Calu3 (cell line): ENCODE measurements at regions of chr11 and their contacts with region 1.

Region 1: DNA sequence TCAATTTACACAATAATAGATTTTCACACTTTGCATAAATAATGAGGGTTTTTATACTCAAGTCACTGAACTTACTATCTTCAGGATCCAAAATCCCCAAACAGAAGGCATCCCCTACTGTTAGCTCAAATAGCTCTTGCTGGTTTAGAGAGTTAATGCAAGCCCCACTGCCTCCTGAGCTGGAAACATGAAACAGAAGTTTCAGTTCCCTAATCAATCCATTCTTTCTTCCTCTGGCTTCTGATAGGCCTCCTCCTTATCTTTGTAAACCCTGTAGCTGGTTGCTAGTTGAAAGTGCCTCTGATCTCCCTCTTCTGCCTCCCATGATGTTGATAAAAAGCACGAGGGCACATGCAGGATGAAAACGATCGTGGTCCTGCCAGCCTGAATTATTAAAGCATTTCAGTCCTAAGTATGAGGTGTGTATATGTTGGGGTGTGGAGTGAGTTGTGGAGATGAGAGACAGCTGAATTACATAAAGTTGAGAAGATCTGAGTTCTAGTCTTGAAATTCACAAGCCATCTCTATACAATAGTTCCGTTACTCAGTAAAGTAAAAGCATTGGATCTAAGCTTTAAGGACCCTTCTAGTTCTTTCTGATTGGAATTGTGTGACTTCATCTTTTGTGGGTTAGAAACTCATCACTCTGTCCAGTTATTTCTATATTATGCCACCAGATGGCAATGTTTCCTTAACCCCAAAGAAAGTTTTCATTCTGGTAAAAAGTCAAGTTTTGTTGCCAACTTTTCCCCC is 35.0 kb upstream of the EHF start:
- DNase-seq: no peak
- H3K4me3 Mint-ChIP-seq: peak overlapping the region; percentile 16
- H3K27ac Mint-ChIP-seq: peak overlapping the region; percentile 46
- H3K4me1 Mint-ChIP-seq: peaks cover 70% of the 10 kb centered on the region
- H3K27me3 Mint-ChIP-seq: no peaks in the 10 kb centered on the region
- CTCF ChIP-seq: no peak

Region 2: DNA sequence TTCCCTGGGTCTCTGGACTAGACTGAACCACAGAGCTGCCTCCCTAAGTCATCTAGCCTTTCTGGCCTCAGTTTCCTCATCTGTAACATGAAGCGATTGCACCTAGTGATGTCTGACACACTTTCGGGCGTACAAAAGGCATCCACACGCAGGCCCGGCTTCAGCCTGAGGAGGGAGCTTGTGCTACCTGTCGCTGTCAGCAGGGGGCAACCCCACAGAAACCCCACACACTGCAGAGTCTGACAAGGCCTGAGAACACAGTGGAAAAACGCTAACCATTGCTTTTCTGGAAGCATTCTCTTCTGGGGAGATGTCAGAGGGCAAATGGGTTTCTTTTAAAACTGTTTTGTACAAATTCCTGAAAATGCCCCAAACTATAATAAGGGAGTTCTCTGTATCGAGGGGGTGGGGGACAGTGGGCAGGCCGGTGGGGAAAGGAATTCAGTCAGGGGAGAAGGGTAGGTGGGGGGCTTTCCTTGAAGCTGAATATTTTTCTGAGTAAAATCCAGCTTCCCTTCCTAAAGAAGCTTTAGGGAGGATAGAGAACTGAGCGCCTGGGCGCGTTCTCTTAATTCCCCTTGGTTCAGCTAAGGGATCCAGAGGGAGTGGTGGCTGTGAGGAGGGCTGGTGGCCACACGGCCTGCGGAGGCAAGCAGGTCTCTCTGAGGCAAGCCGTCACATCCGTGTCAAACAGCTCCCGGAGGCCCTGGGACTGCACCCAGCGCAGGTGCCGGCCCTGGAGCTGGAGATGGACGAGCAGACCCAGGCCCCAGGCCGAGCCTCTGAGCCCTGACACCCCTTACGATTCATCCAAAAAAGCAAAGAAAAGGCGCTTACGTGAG is 72.8 kb before region 1 on chr11:
- CTCF ChIA-PET with region 1: no interaction called
- intact Hi-C with region 1: loop called (anchors 5 kb)
- DNase-seq: peak; percentile 79
- H3K4me3 Mint-ChIP-seq: no peak overlapping the region
- H3K27ac Mint-ChIP-seq: no peak overlapping the region
- H3K4me1 Mint-ChIP-seq: peaks cover 23% of the 10 kb centered on the region
- H3K27me3 Mint-ChIP-seq: no peaks in the 10 kb centered on the region
- CTCF ChIP-seq: peak; percentile 81

Region 3: DNA sequence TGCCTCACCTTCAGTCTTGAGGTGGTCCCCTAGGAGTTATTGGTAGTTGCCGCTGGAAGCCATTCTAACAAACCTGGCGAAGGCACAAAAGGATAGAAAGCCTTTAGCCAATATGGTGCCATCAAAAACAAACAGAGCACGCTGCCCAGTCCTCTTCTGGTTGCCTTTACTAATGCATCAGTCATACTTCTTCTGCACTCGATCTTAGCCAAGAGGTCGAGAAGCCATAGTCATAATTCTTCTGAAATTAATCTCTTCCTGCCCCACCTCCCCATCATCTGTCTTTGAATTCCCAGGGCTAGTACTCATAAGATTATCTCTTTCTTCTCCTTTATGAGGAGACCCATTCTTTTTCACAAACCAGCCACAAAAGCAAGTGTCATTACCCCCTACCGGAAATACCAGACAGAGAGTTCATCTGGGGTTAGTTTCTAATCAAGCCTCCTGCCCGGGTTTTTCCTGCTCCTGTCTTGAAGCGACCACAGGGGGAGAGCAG is 13.5 kb after region 1 on chr11:
- CTCF ChIA-PET with region 1: interaction called, 16 read pairs
- intact Hi-C with region 1: loop called (anchors 1 kb)
- DNase-seq: peak; percentile 52
- H3K4me3 Mint-ChIP-seq: peak overlapping the region; percentile 51
- H3K27ac Mint-ChIP-seq: peak overlapping the region; percentile 81
- H3K4me1 Mint-ChIP-seq: peaks cover 77% of the 10 kb centered on the region
- H3K27me3 Mint-ChIP-seq: no peaks in the 10 kb centered on the region
- CTCF ChIP-seq: no peak

Region 4: DNA sequence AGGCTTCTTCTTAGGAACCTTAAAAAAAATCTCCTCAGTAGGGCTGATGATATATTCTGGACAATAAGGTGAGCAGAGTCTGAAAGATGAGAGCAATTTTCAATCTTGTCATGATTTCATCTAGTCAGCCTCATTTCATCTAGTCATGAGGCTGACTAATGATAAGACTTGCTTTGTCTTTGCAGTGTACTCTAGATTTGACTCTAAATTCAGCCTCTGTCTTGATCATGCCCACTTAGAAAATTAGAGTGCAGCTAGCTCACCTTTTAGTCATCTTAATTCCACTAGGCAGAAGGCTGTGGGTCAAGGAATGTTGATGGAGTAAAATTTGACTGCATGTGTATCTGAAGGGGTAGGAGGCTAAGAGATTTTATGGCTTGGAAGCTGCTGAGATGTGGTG is 40.5 kb after region 1 on chr11:
- CTCF ChIA-PET with region 1: interaction called, 5 read pairs
- intact Hi-C with region 1: loop called (anchors 2 kb)
- DNase-seq: no peak
- H3K4me3 Mint-ChIP-seq: peak overlapping the region; percentile 91
- H3K27ac Mint-ChIP-seq: peak overlapping the region; percentile 96
- H3K4me1 Mint-ChIP-seq: peaks cover 53% of the 10 kb centered on the region
- H3K27me3 Mint-ChIP-seq: no peaks in the 10 kb centered on the region
- CTCF ChIP-seq: no peak

Region 5: DNA sequence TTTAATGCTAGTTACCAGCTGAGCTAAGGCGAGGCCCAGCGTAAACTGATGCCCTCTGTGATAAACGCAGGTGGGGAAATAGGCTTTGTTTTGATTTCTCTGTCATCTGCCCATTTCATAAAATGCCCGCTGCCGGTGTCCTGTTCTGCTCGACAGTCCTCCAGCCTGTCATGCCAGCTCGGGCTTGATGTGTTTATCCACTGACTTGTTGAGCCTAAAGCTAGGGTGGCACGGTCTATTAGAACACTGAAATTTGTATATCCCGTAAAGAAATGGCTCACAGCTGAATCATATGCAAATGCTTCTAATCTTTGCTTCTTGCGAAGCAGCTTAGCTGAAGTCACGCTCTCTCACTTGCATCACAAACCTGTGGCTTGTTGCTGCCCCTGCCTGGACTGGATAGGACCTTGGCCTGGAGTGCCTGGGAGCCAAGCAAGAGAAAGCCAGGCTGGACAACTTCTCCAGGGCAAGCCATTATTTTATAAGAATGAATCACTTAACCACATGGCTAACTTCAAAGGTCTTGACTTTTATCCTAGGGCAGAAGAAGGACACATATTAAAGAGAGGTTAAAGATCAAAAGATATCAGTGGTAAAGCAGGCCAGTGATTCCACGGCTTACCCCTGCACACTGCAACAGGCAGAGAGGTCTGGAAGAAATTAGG is 68.0 kb after region 1 on chr11:
- CTCF ChIA-PET with region 1: interaction called, 18 read pairs
- intact Hi-C with region 1: loop called (anchors 2 kb)
- DNase-seq: peak; percentile 82
- H3K4me3 Mint-ChIP-seq: peak overlapping the region; percentile 56
- H3K27ac Mint-ChIP-seq: peak overlapping the region; percentile 81
- H3K4me1 Mint-ChIP-seq: peaks cover 79% of the 10 kb centered on the region
- H3K27me3 Mint-ChIP-seq: no peaks in the 10 kb centered on the region
- CTCF ChIP-seq: no peak

Region 6: DNA sequence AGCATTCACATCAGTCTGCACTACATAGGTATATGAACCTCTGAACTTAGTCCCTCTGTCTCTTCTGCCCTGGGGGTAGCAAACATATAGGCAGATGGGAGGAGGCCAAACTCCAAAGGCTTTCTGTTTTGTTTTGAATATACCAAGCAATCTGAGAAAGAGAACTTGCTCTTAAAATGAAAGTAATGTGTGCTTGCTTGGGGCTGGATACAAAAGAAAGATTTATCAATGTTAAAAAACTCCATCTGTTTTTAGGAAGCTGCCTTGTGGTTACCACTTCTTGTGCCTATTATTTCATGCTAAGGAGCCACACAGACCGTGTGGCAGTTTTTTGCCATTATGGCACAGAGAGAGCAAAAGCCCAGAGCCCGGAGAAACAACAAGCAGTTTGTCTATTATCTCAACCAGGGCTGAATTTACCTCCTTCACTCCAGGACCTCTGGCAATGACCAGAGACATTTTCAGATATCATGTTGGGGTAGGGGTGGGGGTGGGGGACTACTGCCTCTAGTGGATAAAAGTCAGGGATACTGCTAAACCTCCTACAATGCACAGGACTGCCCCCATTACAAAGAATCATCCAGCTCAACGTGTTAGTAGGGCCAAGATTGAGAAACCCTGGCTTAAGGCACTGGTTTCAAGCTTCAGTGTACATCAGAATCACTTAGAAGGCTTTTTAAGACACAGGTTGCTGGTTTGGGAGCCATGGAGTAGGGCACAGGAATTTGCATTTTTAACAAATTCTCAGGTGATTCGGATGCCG is 206.1 kb after region 1 on chr11:
- CTCF ChIA-PET with region 1: interaction called, 7 read pairs
- intact Hi-C with region 1: loop called (anchors 2 kb)
- DNase-seq: no peak
- H3K4me3 Mint-ChIP-seq: no peak overlapping the region
- H3K27ac Mint-ChIP-seq: peak overlapping the region; percentile 66
- H3K4me1 Mint-ChIP-seq: peaks cover 67% of the 10 kb centered on the region
- H3K27me3 Mint-ChIP-seq: no peaks in the 10 kb centered on the region
- CTCF ChIP-seq: peak; percentile 24

Region 7: DNA sequence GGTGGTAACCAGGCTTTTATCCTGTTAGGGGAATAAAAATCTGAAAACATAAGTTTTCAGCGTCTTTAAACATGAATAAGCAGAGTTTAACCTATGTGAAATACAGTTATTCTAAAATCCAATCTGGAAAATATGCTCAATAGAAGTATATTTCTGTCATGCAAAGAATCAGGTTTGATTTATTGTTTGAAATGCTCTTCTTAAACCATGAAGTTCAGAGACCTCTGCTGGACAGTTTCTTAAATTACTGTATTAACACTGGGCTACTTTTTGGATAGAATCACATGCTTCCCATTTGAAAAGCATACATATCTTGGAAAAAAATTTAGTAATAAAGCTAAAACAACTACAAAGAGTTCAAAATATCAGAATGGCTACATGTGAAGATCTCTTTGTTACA is 304.9 kb after region 1 on chr11:
- CTCF ChIA-PET with region 1: interaction called, 6 read pairs
- intact Hi-C with region 1: loop called (anchors 1 kb)
- DNase-seq: no peak
- H3K4me3 Mint-ChIP-seq: no peak overlapping the region
- H3K27ac Mint-ChIP-seq: no peak overlapping the region
- H3K4me1 Mint-ChIP-seq: peaks cover 20% of the 10 kb centered on the region
- H3K27me3 Mint-ChIP-seq: no peaks in the 10 kb centered on the region
- CTCF ChIP-seq: no peak